GM13977 (cell line): ENCODE measurements at regions of chr19 and their contacts with region 1.

Region 1: DNA sequence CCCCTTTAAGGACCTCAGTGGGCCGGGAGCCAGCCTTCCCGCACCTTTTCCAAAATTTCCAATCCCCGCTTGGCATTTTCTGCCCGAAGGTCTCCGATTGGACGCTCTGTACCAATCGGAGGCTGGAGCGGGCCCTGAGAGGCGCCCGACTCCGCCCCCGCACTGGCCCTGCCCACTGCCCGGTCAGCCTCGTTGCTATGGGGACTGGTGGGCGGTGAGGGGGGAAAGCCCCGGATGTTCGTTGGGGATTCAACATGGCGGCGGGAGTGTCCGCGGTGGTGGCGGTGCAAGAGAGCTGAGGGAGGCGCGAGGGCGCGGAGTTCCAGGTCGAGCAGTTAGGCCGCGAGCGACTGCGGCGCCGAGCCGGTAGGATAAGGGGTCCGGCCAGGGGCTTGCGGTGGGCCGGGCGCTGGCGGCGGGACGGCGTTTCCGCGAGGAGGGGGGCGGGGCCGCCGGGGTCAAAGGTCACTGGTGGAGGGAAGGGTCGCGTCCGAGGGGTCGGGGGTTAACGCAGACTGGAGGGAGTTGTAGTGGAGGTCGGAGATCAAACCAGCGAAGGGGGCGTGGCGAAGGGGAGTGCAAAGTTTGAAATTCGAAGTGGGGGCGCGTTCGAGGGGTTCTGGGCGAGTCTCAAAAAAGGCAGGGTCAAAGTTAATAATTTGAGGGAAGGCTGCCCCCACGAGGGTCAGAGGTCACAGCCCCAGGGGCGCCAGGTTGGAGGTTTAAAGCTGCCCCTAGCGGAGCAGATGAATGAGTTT is at the start of gene PAK4:
- DNase-seq: peak; percentile 100
- CTCF ChIP-seq: no peak

Region 2: GRCh38 chr19:39335168-39335548 is 209.4 kb after region 1 on chr19:
- in situ Hi-C with region 1: loop called (anchors 10 kb)
- DNase-seq: no peak
- CTCF ChIP-seq: no peak